ENCODE measurements at regions of chr1 and their contacts with region 1.

Region 1: DNA sequence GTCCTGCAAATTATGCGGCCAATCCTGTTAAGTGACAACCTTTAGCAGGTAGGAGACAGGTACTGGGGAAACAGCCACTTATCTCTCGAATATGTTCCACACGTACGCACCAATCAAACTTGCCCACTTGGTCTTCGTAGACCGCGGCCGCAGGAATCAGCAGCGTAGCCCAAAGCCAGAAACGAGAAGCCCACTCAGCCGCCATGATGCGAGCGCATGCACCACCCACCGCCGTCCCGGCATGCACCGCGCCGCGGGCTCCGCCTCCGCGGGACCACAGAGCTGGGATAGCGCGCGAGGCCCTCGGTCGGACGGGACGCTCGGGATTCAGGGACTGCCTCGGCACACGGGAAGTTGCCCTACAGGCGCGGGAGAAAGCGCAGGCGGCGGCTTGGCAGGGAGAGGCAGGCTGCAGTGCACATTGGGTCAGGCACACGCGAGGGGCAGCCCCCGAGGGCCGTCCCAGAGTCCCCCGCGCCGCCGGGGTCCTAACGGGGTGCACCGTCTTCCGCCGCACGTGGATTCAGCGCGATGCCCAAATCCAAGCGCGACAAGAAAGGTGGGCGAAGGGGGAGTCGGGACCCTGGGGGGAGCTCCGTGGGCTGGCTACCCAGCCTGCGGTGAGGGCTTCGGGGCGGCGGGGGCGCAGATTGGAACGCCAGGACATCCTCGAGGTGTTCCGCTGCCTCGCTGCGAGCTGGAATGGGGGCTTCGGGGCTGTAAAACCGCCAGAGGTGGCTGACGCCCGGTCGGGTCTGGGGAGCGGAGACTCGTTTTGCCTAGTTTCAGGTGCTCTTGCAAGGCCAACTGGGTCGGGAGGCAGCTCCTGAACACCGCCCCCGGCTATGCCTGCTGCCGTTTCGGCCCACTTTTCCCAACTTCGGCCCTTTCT is at the starts of genes EMC1 and MRTO4:
- DNase-seq: peak; percentile 83 to 94 (median 87)
- ATAC-seq: peak; percentile 93
- H3K4me3 ChIP-seq: peak within 1 kb of the TSS; percentile 66 to 88
- H3K4me3 Mint-ChIP-seq: peak within 1 kb of the TSS; percentile 95
- H3K27ac ChIP-seq: peak within 1 kb of the TSS; percentile 83 to 98
- H3K27ac Mint-ChIP-seq: peak within 1 kb of the TSS; percentile 94
- H3K4me1 ChIP-seq: peaks cover 34% of the 10 kb centered on the region
- H3K4me1 Mint-ChIP-seq: peaks cover 38% of the 10 kb centered on the region
- H3K27me3 ChIP-seq: no peaks in the 10 kb centered on the region
- H3K27me3 Mint-ChIP-seq: no peaks in the 10 kb centered on the region
- CTCF ChIP-seq: no peak
- total RNA-seq, gene EMC1: 28.2 to 33.5 TPM
- total RNA-seq, gene MRTO4: 18.9 to 19.5 TPM

Region 2: GRCh38 chr1:18716785-18717678 is 534.5 kb before region 1 on chr1:
- CTCF ChIA-PET with region 1: no interaction called
- POLR2A ChIA-PET with region 1: no interaction called
- intact Hi-C with region 1: no loop called
- DNase-seq: no peak
- ATAC-seq: no peak
- H3K4me3 ChIP-seq: no peak overlapping the region
- H3K4me3 Mint-ChIP-seq: no peak overlapping the region
- H3K27ac ChIP-seq: no peak overlapping the region
- H3K27ac Mint-ChIP-seq: no peak overlapping the region
- H3K4me1 ChIP-seq: no peaks in the 10 kb centered on the region
- H3K4me1 Mint-ChIP-seq: peaks cover 8% of the 10 kb centered on the region
- H3K27me3 ChIP-seq: peaks cover 0 to 14% of the 10 kb centered on the region in 2 experiments
- H3K27me3 Mint-ChIP-seq: peaks cover 61% of the 10 kb centered on the region
- CTCF ChIP-seq: no peak

Region 3: GRCh38 chr1:19209990-19210771 is 41.4 kb before region 1 on chr1 and contains the start of gene UBR4:
- CTCF ChIA-PET with region 1: no interaction called
- POLR2A ChIA-PET with region 1: interaction called, 13 read pairs
- intact Hi-C with region 1: loop called (anchors 1 kb)
- DNase-seq: peak; percentile 91 to 99 (median 97)
- ATAC-seq: peak; percentile 93
- H3K4me3 ChIP-seq: peak within 1 kb of the TSS; percentile 73 to 96
- H3K4me3 Mint-ChIP-seq: peak within 1 kb of the TSS; percentile 96
- H3K27ac ChIP-seq: peak within 1 kb of the TSS; percentile 86 to 96
- H3K27ac Mint-ChIP-seq: peak within 1 kb of the TSS; percentile 99
- H3K4me1 ChIP-seq: peaks cover 48% of the 10 kb centered on the region
- H3K4me1 Mint-ChIP-seq: peaks cover 76% of the 10 kb centered on the region
- H3K27me3 ChIP-seq: no peaks in the 10 kb centered on the region
- H3K27me3 Mint-ChIP-seq: no peaks in the 10 kb centered on the region
- CTCF ChIP-seq: no peak
- total RNA-seq, gene UBR4: 146 to 148 TPM

Region 4: GRCh38 chr1:19374083-19374801 is 122.7 kb after region 1 on chr1:
- CTCF ChIA-PET with region 1: no interaction called
- POLR2A ChIA-PET with region 1: no interaction called
- intact Hi-C with region 1: no loop called
- DNase-seq: peak in 2 of 9 experiments; percentile 29 to 34
- ATAC-seq: peak; percentile 31
- H3K4me3 ChIP-seq: no peak overlapping the region
- H3K4me3 Mint-ChIP-seq: no peak overlapping the region
- H3K27ac ChIP-seq: no peak overlapping the region
- H3K27ac Mint-ChIP-seq: no peak overlapping the region
- H3K4me1 ChIP-seq: no peaks in the 10 kb centered on the region
- H3K4me1 Mint-ChIP-seq: peaks cover 34% of the 10 kb centered on the region
- H3K27me3 ChIP-seq: no peaks in the 10 kb centered on the region
- H3K27me3 Mint-ChIP-seq: no peaks in the 10 kb centered on the region
- CTCF ChIP-seq: no peak